ENCODE measurements at regions of chr1 and their contacts with region 1.

Region 1: GRCh38 chr1:210584439-210585113 is 255.9 kb downstream of the HHAT start:
- DNase-seq: peak; percentile 85
- H3K4me3 Mint-ChIP-seq: no peak overlapping the region
- H3K27ac Mint-ChIP-seq: no peak overlapping the region
- H3K4me1 Mint-ChIP-seq: no peaks in the 10 kb centered on the region
- H3K27me3 Mint-ChIP-seq: peaks cover 3% of the 10 kb centered on the region

Region 2: DNA sequence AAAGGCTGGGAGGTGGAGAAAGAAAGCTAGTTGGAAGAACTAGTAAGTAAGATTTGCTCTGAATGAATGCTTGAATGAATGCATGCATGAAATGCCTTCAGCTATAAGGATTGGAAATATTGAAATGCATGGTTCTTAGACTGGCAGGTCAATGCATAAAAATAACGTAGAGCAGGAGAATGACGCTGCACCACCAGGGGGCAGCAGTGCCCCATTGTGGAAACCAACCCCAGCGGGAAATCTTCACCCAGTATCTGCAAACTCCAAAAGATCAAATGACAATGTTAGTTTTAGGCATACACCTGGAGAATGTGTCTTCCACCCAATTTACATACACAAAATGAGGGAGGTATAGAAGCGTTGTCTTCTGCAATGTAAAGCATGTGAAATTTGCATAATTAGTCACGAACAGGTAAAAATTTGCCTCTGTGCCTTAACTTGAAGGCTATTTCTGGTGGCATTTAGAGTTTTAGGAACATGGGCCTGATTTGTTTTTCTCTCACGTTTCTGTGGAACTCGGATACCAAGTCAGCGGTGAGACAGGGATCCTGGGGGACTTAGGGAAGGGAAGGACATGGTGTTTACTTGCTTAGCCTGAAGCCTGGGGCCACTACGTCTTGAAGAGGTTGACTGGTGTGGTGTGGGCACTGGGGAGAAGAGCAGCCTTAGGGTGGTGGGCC is 177.2 kb before region 1 on chr1:
- CTCF ChIA-PET with region 1: no interaction called
- POLR2A ChIA-PET with region 1: no interaction called
- intact Hi-C with region 1: loop called (anchors 2 kb)
- DNase-seq: peak; percentile 84
- H3K4me3 Mint-ChIP-seq: no peak overlapping the region
- H3K27ac Mint-ChIP-seq: no peak overlapping the region
- H3K4me1 Mint-ChIP-seq: peaks cover 2% of the 10 kb centered on the region
- H3K27me3 Mint-ChIP-seq: no peaks in the 10 kb centered on the region

Region 3: GRCh38 chr1:210571356-210572284 is 13.0 kb before region 1 on chr1:
- CTCF ChIA-PET with region 1: no interaction called
- POLR2A ChIA-PET with region 1: no interaction called
- intact Hi-C with region 1: no loop called
- DNase-seq: no peak
- H3K4me3 Mint-ChIP-seq: no peak overlapping the region
- H3K27ac Mint-ChIP-seq: no peak overlapping the region
- H3K4me1 Mint-ChIP-seq: no peaks in the 10 kb centered on the region
- H3K27me3 Mint-ChIP-seq: no peaks in the 10 kb centered on the region

Region 4: GRCh38 chr1:210951279-210951678 is 366.7 kb after region 1 on chr1:
- CTCF ChIA-PET with region 1: interaction called, 4 read pairs
- POLR2A ChIA-PET with region 1: no interaction called
- intact Hi-C with region 1: loop called (anchors 1 kb)
- DNase-seq: no peak
- H3K4me3 Mint-ChIP-seq: no peak overlapping the region
- H3K27ac Mint-ChIP-seq: no peak overlapping the region
- H3K4me1 Mint-ChIP-seq: no peaks in the 10 kb centered on the region
- H3K27me3 Mint-ChIP-seq: peaks cover 2% of the 10 kb centered on the region

Region 5: GRCh38 chr1:211654838-211655787 is 1070.5 kb after region 1 on chr1:
- CTCF ChIA-PET with region 1: no interaction called
- POLR2A ChIA-PET with region 1: no interaction called
- intact Hi-C with region 1: loop called (anchors 10 kb)
- DNase-seq: peak; percentile 87
- H3K4me3 Mint-ChIP-seq: no peak overlapping the region
- H3K27ac Mint-ChIP-seq: no peak overlapping the region
- H3K4me1 Mint-ChIP-seq: no peaks in the 10 kb centered on the region
- H3K27me3 Mint-ChIP-seq: no peaks in the 10 kb centered on the region